ENCODE measurements at regions of chr20 and their contacts with region 1.

Region 1: DNA sequence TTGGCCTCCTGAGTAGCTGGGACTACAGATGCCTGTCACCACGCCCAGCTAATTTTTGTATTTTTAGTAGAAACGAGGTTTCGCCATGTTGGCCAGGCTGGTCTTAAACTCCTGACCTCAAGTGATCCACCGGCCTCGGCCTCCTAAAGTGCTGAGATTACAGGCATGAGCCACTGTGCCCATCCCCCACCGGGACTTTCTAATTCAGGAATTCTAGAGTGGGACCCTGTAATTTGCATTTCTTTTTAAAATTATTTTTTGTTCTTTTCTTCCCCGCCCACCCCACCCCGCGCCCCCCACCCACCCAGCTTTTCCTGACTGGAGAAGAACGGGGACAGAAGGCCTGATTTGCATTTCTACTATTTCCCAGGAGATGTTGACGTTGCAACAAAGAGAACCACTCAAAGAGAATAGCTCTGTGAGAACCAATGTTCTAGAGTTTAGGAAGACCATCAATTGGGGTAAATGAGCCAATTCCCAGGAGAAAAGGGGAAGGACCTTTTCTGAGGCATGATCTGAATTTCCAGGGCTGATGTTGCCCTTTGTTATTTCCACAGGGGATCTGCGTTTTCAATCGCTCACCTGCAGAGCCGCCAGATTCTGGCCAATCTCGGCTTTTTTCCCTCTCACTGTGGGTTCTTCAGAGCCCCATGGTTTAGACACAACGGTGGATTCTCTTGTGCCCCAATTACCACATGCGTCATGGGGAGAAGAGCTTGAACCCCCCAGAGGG is 33.2 kb upstream of the TFAP2C start:
- DNase-seq: no peak
- H3K4me3 ChIP-seq: no peak overlapping the region
- H3K27ac ChIP-seq: no peak overlapping the region
- H3K4me1 ChIP-seq: no peaks in the 10 kb centered on the region
- H3K27me3 ChIP-seq: peaks cover 0 to 41% (median 0%) of the 10 kb centered on the region in 3 donors
- CTCF ChIP-seq: no peak
- EP300 ChIP-seq: no peak
- POLR2A ChIP-seq: no peak

Region 2: DNA sequence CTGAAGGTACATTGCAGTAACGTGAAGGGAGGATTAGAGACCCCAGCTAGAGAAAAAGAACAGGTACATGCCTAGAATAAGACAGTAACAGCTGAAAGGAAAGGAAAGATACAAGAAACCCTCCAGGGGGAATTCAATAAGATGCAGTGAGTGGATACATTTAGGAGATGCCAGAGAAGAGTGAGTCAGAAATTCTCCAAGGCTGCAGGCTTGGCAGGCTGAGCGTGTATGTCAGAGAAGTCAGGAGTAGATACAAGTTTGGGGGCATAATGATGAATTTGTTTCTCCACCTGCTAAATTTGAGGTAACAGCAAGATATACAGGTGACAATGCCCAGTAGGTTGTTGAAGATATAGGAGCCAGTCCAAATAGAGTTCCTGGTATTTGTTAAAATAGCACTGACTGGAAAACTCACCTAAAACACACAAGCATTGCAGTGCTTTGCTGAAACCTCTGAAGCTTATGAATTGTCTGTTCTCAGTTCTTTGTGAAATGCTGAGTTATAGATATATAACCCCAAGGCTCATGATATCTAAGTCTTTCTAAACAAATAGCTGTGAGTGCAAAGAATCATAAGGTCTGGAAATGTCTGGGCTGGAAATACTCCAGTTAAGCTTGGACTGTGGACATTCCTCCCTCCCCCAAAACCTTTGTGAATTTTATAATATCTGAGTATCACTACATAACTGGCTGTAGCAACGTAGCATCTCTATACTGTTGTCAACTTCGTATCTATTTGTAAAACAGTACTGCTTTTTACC is 659.9 kb before region 1 on chr20:
- intact Hi-C with region 1: no loop called
- DNase-seq: peak in 1 of 2 donors; percentile 15
- H3K4me3 ChIP-seq: no peak overlapping the region
- H3K27ac ChIP-seq: no peak overlapping the region
- H3K4me1 ChIP-seq: peaks cover 0 to 7% (median 0%) of the 10 kb centered on the region in 4 donors
- H3K27me3 ChIP-seq: no peaks in the 10 kb centered on the region
- CTCF ChIP-seq: no peak
- EP300 ChIP-seq: no peak
- POLR2A ChIP-seq: no peak

Region 3: DNA sequence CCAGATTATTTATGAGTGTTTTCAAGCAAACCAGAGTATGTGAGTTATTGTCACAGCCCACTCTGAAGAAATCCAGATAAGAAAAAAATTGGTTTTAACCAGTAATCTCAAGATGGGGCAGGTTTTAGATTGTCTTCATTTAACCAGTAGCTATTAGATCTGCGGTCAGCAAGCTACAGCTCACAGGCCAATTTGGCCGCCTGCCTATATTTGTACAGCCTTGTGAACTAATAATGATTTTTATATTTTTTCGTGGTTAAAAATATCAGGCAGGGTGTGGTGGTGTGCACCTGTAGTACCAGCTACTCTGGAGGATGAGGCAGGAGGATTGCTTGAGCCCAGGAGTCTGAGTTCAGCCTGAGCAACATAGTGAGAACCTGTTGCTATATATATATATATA is 57.9 kb before region 1 on chr20:
- intact Hi-C with region 1: loop called (anchors 10 kb)
- DNase-seq: no peak
- H3K4me3 ChIP-seq: no peak overlapping the region
- H3K27ac ChIP-seq: no peak overlapping the region
- H3K4me1 ChIP-seq: no peaks in the 10 kb centered on the region
- H3K27me3 ChIP-seq: no peaks in the 10 kb centered on the region
- CTCF ChIP-seq: no peak
- EP300 ChIP-seq: no peak
- POLR2A ChIP-seq: no peak

Region 4: GRCh38 chr20:57048027-57048869 is 452.3 kb after region 1 on chr20:
- intact Hi-C with region 1: no loop called
- DNase-seq: peak in 1 of 2 donors; percentile 51
- H3K4me3 ChIP-seq: no peak overlapping the region
- H3K27ac ChIP-seq: no peak overlapping the region
- H3K4me1 ChIP-seq: peaks cover 0 to 5% (median 0%) of the 10 kb centered on the region in 4 donors
- H3K27me3 ChIP-seq: peaks cover 0 to 26% (median 10%) of the 10 kb centered on the region in 3 donors
- CTCF ChIP-seq: peak in 4 of 7 experiments; percentile 16 to 37 (median 32)
- EP300 ChIP-seq: no peak
- POLR2A ChIP-seq: no peak

Measured in stomach (tissue), 19 donors.